GM12878 (cell line): ENCODE measurements at regions of chr6 and their contacts with region 1.

Region 1: DNA sequence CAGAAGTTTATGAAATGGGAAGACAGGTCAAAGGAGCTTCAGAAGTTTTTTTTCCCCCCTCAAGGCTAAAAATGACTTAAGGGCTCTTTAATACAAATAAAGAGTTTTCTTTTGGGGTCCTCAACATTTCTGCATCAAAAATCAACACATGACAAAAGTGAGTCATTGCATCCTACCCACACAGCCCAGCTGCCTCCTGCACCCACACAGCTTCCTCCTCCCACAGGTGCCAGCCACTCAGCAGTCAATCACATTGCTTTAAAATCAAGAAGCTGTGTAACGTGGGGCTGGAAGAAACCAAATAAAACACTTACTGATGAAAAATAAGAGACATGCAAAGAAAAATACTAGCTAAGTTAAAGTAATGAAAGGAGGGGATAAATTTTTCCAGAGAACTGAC is 68.5 kb downstream of the MAP3K5 start:
- DNase-seq: peak; percentile 53
- ATAC-seq: peak; percentile 64
- H3K4me3 ChIP-seq: no peak overlapping the region
- H3K27ac ChIP-seq: peak overlapping the region; percentile 30
- H3K4me1 ChIP-seq: peaks cover 20% of the 10 kb centered on the region
- H3K27me3 ChIP-seq: no peaks in the 10 kb centered on the region
- CTCF ChIP-seq: no peak
- EP300 ChIP-seq: no peak
- POLR2A ChIP-seq: no peak
- RAD21 ChIP-seq: no peak

Region 2: DNA sequence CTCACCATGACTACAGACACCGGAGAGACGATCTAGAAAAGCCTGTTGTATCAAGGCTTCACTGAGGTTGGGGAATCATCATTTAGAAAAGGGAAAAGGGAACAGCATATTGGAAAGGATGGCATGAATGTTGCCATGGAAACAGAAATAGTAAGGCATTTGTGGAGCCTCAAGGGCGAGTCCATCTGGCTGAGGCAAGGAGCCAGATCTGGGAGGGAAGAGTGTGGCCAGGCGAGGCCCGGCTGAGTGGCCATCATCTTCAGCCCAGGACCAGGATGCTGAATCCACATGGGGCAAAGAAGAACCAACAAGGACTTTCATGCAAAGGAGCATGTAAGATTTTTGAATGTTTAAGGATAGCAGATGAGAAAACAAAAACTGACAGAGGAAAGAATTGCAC is 17.4 kb before region 1 on chr6:
- CTCF ChIA-PET with region 1: interaction called, 3 read pairs
- POLR2A ChIA-PET with region 1: interaction called, 3 read pairs
- RAD21 ChIA-PET with region 1: interaction called, 5 read pairs
- SMC1A ChIA-PET with region 1: interaction called, 28 read pairs
- in situ Hi-C with region 1: no loop called
- intact Hi-C with region 1: no loop called
- DNase-seq: no peak
- ATAC-seq: no peak
- H3K4me3 ChIP-seq: no peak overlapping the region
- H3K27ac ChIP-seq: no peak overlapping the region
- H3K4me1 ChIP-seq: no peaks in the 10 kb centered on the region
- H3K27me3 ChIP-seq: no peaks in the 10 kb centered on the region
- CTCF ChIP-seq: no peak
- EP300 ChIP-seq: no peak
- POLR2A ChIP-seq: no peak
- RAD21 ChIP-seq: no peak

Region 3: GRCh38 chr6:136737871-136738691 is 14.3 kb after region 1 on chr6:
- CTCF ChIA-PET with region 1: interaction called, 24 read pairs
- POLR2A ChIA-PET with region 1: interaction called, 6 read pairs
- RAD21 ChIA-PET with region 1: interaction called, 20 read pairs
- SMC1A ChIA-PET with region 1: interaction called, 370 read pairs
- in situ Hi-C with region 1: no loop called
- intact Hi-C with region 1: no loop called
- DNase-seq: no peak
- ATAC-seq: no peak
- H3K4me3 ChIP-seq: no peak overlapping the region
- H3K27ac ChIP-seq: no peak overlapping the region
- H3K4me1 ChIP-seq: peaks cover 7% of the 10 kb centered on the region; the same call in 1 of the 2 replicates
- H3K27me3 ChIP-seq: no peaks in the 10 kb centered on the region
- CTCF ChIP-seq: no peak
- EP300 ChIP-seq: no peak
- POLR2A ChIP-seq: no peak
- RAD21 ChIP-seq: no peak

Region 4: DNA sequence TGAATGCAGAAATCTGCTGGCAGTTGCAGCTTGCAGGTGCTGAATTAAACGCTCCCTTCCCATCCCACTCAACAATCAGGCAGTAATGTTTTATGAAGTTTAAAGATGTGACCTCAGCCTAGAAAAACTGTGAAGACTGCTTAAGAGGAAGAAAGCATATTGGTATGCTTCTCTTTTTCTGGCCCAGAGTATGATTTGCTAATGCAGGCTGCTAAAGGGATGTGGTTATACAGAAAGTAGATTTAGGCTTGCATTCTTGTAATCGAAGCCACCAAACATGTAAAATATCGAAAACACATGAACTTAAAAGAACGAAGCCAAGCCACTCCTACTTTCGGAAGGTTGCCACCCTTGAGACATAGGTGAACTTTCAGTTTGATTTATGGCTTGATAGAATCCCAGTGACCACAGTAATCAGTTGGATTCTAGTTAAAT is 27.8 kb after region 1 on chr6:
- CTCF ChIA-PET with region 1: interaction called, 4 read pairs
- POLR2A ChIA-PET with region 1: interaction called, 16 read pairs
- RAD21 ChIA-PET with region 1: interaction called, 51 read pairs
- SMC1A ChIA-PET with region 1: interaction called, 370 read pairs
- in situ Hi-C with region 1: no loop called
- intact Hi-C with region 1: loop called (anchors 1 kb)
- DNase-seq: peak; percentile 94
- ATAC-seq: peak; percentile 93
- H3K4me3 ChIP-seq: peak overlapping the region; percentile 31; the same call in 1 of the 2 replicates
- H3K27ac ChIP-seq: peak overlapping the region; percentile 93
- H3K4me1 ChIP-seq: peaks cover 48% of the 10 kb centered on the region
- H3K27me3 ChIP-seq: no peaks in the 10 kb centered on the region
- CTCF ChIP-seq: no peak
- EP300 ChIP-seq: peak; percentile 21 to 70; a peak in 3 of 4 replicates
- POLR2A ChIP-seq: no peak
- RAD21 ChIP-seq: 0 out of 2 replicates have a peak, but pooled peaks have one; percentile 28

Region 5: DNA sequence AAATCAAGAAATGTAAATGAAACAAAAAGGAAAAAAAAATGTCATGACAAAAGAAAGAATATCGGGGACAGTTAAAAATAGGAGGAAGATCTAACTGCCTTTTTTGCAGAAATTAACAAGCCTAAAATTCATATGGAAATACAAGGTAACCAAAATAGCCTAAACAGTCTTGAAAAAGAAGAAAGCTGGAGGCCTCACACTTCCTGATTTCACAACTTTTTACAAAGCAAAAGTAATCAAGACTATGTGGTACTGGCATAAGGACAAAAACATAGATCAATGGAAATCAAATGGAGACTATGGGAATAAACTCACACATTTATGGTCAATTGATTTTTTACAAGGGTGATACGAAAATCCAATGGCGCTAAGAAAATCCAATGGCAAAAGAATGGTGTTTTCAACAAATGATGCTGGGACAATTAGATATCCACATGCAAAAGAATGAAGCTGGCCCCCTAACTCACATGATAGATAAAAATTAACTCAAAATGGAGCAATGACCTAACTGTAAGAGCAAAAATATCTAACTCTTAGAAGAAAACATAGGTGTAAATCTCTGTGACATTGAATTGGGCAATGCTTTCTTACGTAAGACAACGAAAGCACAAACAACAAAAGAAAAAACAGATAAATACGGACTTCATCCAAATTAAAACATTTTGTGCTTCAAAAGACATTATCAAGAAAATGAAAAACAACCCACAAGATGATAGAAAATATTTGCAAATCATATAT is 44.0 kb after region 1 on chr6:
- CTCF ChIA-PET with region 1: interaction called, 63 read pairs
- POLR2A ChIA-PET with region 1: interaction called, 163 read pairs
- RAD21 ChIA-PET with region 1: interaction called, 246 read pairs
- SMC1A ChIA-PET with region 1: interaction called, 268 read pairs
- in situ Hi-C with region 1: no loop called
- intact Hi-C with region 1: loop called (anchors 1 kb)
- DNase-seq: no peak
- ATAC-seq: no peak
- H3K4me3 ChIP-seq: peak overlapping the region; percentile 46
- H3K27ac ChIP-seq: peak overlapping the region; percentile 97
- H3K4me1 ChIP-seq: peaks cover 71% of the 10 kb centered on the region
- H3K27me3 ChIP-seq: no peaks in the 10 kb centered on the region
- CTCF ChIP-seq: no peak
- EP300 ChIP-seq: no peak
- POLR2A ChIP-seq: no peak
- RAD21 ChIP-seq: no peak

Region 6: DNA sequence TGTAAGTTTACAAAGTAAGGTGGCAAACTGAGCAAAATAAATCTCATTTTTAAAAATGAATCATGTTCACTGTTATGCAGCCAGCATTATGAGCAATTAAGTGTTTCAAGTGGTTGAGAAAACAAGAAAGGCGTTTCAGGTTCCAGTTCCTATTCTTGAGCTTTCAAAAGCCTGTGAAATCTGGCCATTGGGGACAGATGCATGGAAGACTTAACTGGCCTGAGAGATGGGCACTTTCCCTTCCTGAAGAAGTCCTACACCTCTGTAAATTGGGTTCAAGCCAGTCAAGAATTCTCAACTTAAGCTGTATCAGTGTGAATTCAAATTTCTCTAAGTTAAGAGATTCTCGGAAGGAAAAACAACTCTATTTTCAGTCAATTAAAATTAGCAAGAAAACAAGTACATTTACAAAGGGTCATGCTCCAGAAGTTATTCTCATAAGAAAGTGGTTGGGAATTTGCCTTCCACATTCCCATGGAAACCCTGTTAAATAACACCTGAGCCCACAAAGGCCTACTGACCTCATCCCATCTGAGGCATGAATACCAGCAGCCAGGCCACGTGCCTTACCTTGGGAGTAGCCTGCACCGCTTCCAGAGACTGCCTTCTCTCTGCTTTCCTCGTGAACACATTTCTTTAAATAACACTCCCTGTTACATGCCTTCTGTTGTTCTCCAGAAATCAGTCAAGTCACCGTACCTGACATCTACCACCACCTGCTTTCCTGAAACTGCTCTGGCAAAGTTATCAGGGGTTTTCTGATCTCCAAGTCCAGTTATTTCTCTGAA is 49.1 kb after region 1 on chr6:
- CTCF ChIA-PET with region 1: interaction called, 4 read pairs
- POLR2A ChIA-PET with region 1: interaction called, 33 read pairs
- RAD21 ChIA-PET with region 1: interaction called, 92 read pairs
- SMC1A ChIA-PET with region 1: interaction called, 105 read pairs
- in situ Hi-C with region 1: no loop called
- intact Hi-C with region 1: loop called (anchors 1 kb)
- DNase-seq: peak; percentile 93
- ATAC-seq: peak; percentile 75
- H3K4me3 ChIP-seq: peak overlapping the region; percentile 49
- H3K27ac ChIP-seq: peak overlapping the region; percentile 92
- H3K4me1 ChIP-seq: peaks cover 57% of the 10 kb centered on the region
- H3K27me3 ChIP-seq: no peaks in the 10 kb centered on the region
- CTCF ChIP-seq: no peak
- EP300 ChIP-seq: peak; percentile 50 to 93; a peak in 3 of 4 replicates
- POLR2A ChIP-seq: peak; percentile 38; the same call in 1 of the 2 replicates
- RAD21 ChIP-seq: no peak; the same call in 1 of the 2 replicates

Region 7: DNA sequence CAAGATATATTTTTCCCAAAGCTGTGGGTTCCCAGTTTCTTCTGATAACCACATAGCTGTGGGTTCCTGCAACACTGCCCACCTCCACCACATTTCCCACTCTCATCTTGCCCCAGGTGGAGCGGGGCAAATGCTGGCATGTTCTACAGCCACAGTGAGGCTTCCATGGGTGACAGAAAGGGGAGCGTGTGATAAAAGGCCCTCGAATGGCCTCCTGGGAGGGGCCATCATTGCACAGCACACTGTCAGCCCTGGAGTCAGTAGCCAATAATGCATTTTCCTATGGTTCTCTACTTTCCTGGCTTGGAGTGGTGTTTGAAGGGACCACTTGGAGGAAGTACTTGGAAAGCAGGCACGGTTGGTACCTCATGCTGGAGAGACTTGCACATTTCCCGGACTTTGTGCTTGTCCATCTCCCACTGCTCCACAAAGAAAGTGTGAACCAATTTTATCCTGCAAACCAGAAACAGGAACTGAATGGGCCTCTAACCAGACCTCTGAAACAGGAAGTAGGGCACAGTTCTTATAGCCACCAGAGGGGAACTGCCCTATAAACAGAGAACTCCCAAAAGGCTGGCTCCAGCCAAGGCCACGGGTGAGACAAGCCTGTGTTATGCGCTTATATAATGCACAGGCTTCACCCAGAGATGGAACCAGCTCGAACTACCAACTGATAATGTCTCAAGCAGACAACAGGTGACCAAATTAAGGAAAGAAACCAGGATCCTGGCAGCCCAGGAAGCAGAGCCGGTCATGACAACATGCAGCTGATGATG is 59.9 kb after region 1 on chr6:
- CTCF ChIA-PET with region 1: interaction called, 136 read pairs
- POLR2A ChIA-PET with region 1: interaction called, 265 read pairs
- RAD21 ChIA-PET with region 1: interaction called, 405 read pairs
- SMC1A ChIA-PET with region 1: interaction called, 446 read pairs
- in situ Hi-C with region 1: loop called (anchors 5 kb)
- intact Hi-C with region 1: no loop called
- DNase-seq: no peak
- ATAC-seq: peak; percentile 75
- H3K4me3 ChIP-seq: peak overlapping the region; percentile 76
- H3K27ac ChIP-seq: peak overlapping the region; percentile 92
- H3K4me1 ChIP-seq: peaks cover 27% of the 10 kb centered on the region
- H3K27me3 ChIP-seq: no peaks in the 10 kb centered on the region
- CTCF ChIP-seq: peak in 2 of 3 experiments; percentile 18 to 34; a peak in 1 of 6 replicates
- EP300 ChIP-seq: peak in 1 of 2 experiments; percentile 59; a peak in 1 of 4 replicates
- POLR2A ChIP-seq: peak; percentile 33; the same call in 1 of the 2 replicates
- RAD21 ChIP-seq: no peak